Breast epithelium (tissue), 4 donors: ENCODE measurements at regions of chr6 and their contacts with region 1.

Region 1: GRCh38 chr6:151705977-151706755 is 101.3 kb upstream of the ESR1 start:
- DNase-seq: no peak
- H3K4me3 ChIP-seq: no peak overlapping the region
- H3K27ac ChIP-seq: no peak overlapping the region
- H3K4me1 ChIP-seq: no peaks in the 10 kb centered on the region
- H3K27me3 ChIP-seq: no peaks in the 10 kb centered on the region
- CTCF ChIP-seq: no peak
- POLR2A ChIP-seq: no peak

Region 2: DNA sequence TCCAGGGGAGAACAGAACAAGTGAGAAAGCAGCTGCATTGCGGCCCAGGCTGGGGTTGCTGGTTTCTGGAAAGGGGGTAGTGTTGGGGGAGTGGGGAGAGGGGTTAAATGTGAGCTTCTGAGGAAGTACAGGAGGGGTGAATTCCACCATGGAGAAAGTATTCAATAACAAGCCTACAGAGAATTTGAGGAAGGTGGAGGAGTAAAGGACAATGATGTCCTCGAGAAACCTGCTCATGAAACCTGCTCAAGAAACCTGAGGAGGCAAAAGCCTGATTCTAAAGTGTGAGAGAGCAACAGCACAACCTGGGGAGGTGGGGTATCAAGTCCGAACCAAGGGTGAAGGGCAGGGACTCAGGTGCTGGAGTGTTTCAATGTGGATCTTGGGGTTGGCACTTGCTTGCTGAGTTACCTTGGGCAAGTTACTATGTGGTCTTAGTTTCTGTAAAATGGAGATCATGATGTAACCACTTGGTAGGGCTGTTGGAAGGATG is 36.9 kb before region 1 on chr6:
- intact Hi-C with region 1: loop called (anchors 2 kb)
- DNase-seq: no peak
- H3K4me3 ChIP-seq: no peak overlapping the region
- H3K27ac ChIP-seq: peak overlapping the region; percentile 42 to 76
- H3K4me1 ChIP-seq: no peaks in the 10 kb centered on the region
- H3K27me3 ChIP-seq: no peaks in the 10 kb centered on the region
- CTCF ChIP-seq: no peak
- POLR2A ChIP-seq: no peak